ENCODE measurements at regions of chr3 and their contacts with region 1.

Region 1: DNA sequence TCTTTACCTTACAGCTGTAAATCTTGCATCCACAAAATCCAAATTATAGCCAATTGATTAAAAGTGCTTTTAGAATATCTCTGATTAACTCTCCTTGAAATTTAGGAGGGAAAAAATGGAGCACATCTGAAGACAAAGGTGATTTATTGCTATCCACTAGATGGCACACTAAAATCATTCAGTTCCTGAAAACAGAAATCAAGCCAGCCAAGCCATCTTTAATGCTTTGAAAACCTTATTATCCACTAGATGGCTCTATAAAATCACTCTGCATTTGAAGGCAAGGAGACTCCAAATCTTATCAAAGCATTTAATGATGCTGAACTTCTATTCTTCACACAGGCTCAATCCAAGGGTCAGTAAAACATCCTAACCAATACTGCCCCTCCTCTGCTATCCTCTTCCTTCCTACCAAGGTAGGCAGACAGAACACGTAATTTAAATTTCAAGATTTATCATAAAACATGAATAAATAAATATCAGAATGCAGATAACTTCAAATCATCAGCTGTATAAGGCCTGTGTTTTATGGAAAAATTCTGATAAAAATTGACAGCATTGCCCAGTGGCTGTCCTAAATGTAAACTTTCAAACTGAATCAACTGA is 48.4 kb downstream of the GOLIM4 start:
- DNase-seq: peak; percentile 55
- H3K4me3 ChIP-seq: no peak overlapping the region
- H3K27ac ChIP-seq: no peak overlapping the region
- H3K27me3 ChIP-seq: no peaks in the 10 kb centered on the region
- CTCF ChIP-seq: peak; percentile 83

Region 2: DNA sequence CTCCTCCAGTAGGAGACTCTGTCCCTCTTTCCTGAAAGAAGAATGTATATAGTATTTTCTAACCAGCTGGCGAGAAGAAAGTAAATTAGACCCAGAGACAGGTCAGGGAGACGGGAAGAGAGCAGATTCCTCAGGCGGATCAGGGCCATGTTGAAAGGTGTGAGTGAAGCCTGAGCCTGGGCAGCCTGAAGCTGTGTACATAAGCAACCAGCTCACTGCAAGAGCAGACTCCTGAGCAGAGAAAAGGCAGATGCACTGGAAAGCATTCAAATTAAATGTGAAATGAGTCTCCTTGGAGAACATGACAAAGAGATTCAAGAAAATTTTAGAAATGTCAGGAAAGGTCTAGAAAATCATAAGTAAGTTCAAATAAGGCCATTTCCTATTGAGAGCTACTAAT is 117.3 kb before region 1 on chr3:
- CTCF ChIA-PET with region 1: interaction called, 75 read pairs
- POLR2A ChIA-PET with region 1: no interaction called
- DNase-seq: no peak
- H3K4me3 ChIP-seq: no peak overlapping the region
- H3K27ac ChIP-seq: no peak overlapping the region
- H3K27me3 ChIP-seq: no peaks in the 10 kb centered on the region
- CTCF ChIP-seq: no peak

Region 3: GRCh38 chr3:167992381-167992780 is 54.9 kb before region 1 on chr3:
- CTCF ChIA-PET with region 1: no interaction called
- POLR2A ChIA-PET with region 1: no interaction called
- DNase-seq: no peak
- H3K4me3 ChIP-seq: no peak overlapping the region
- H3K27ac ChIP-seq: no peak overlapping the region
- H3K27me3 ChIP-seq: no peaks in the 10 kb centered on the region
- CTCF ChIP-seq: no peak

Region 4: GRCh38 chr3:168002786-168003368 is 44.4 kb before region 1 on chr3:
- CTCF ChIA-PET with region 1: no interaction called
- POLR2A ChIA-PET with region 1: no interaction called
- DNase-seq: no peak
- H3K4me3 ChIP-seq: no peak overlapping the region
- H3K27ac ChIP-seq: no peak overlapping the region
- H3K27me3 ChIP-seq: no peaks in the 10 kb centered on the region
- CTCF ChIP-seq: no peak

Region 5: GRCh38 chr3:168061332-168061996 is 14.2 kb after region 1 on chr3:
- CTCF ChIA-PET with region 1: interaction called, 14 read pairs
- POLR2A ChIA-PET with region 1: no interaction called
- DNase-seq: no peak
- H3K4me3 ChIP-seq: no peak overlapping the region
- H3K27ac ChIP-seq: no peak overlapping the region
- H3K27me3 ChIP-seq: no peaks in the 10 kb centered on the region
- CTCF ChIP-seq: no peak

Region 6: DNA sequence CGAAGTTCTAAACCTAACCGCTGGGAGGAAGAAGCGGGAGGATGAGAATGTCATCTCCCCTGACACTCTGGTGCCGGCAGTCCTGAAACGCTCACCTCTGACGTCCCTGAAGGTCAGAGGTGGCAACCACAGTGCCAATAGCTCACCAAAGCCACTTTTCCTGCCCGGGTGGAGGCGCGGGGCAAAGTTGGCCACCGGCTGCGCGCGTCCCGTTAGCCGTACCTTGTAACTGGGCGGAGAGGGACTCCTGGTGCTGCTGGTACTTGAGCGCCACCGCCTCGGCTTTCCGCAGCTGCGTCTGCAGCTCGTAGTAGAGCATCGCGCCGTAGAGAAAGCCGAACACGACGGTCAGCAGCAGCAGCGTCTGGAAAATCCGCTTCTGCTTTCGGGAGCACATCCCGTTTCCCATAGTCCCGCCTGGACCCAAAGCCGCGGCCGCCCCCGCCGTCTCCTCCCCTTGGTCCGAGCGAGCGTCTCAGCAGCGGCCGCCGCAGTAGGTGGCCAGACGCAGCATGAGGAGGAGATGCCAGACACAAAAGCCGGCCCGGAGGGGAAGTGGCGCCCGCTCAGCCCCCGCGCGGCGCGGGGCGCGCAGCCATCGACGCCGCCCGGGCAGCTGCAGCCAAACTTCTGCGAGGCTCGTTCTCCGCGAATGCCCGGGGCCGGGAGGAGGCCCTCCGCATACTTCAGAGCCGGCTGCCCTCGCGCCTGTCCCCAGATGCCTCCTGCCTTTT is 47.8 kb after region 1 on chr3:
- CTCF ChIA-PET with region 1: interaction called, 29 read pairs
- POLR2A ChIA-PET with region 1: no interaction called
- DNase-seq: no peak
- H3K4me3 ChIP-seq: peak overlapping the region; percentile 88
- H3K27ac ChIP-seq: peak overlapping the region; percentile 90
- H3K27me3 ChIP-seq: no peaks in the 10 kb centered on the region
- CTCF ChIP-seq: peak; percentile 37; the same call in 1 of the 2 replicates

Region 7: DNA sequence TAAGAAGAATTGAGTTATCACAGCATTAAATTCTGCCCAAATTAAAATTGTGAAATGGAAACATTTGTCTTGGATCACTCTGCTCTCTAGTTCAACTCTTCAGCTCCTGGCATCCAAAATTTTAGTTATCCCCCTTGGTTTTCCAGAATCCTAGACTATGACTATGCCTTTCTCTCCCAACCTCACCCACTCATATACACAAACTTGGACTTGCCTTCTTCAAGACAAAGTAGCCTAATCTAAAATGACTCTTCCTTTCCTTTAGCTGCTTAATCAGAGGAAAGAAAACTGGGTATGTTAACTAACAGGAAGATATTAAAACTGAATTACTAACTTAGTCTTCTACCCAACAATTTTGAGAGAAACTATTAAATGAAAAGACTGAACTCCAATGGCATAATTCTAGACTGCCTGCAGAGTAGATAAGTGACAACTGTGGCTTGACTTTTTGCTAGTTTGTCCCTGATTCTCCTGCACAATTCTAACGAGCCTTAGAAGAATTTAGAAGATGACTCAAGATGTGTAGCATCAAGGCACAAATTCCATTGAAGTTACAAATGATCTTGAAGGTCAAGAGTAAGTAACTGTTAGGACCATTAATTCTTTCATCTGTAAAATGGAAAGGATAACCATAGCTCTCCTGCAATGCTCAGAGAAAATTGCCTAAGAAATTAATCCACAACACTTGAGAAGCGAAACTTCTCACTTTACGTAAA is 53.6 kb after region 1 on chr3:
- CTCF ChIA-PET with region 1: interaction called, 29 read pairs
- POLR2A ChIA-PET with region 1: no interaction called
- DNase-seq: no peak
- H3K4me3 ChIP-seq: no peak overlapping the region
- H3K27ac ChIP-seq: no peak overlapping the region
- H3K27me3 ChIP-seq: no peaks in the 10 kb centered on the region
- CTCF ChIP-seq: no peak

Region 8: DNA sequence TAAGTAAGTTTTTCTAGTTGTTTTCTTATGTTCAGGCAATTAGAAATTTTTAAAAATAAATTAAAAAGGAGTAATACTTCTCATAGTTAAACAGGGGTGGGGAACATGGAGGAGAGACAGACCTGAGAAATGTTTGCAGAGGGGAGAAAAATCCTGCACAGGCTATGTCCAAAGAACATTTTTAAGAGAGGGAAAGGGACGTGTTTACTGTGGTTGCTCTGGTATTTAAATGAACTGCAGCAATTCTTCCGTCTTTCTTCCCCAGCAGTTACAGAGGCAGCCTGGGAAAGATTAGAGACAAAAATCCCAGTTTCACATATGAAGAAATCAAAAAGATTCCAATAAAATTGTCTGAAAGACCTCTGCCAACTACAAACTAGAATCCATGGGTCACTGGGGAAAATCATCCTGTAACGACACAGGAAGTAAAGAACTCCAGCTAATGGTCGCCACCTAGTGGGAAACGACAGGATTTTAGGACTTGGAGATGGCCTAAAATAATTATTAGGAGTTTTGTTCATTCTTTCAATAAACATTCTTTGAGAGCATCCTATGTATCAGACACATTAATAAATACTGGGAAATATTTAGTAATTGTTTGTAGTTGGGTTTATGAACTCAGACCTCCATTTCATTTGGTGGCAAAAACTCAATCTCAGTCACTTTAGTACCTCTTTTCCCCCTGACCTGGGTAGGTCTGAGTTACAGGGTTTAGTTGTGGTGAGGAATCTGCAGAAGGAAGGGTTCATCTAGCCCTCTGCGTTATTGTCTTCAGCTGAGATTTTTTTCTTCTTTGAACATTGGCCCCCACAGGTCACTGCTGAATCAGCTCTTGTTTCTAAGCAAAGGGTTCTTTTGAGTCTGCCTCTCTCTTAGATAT is 118.3 kb after region 1 on chr3:
- CTCF ChIA-PET with region 1: interaction called, 424 read pairs
- POLR2A ChIA-PET with region 1: no interaction called
- DNase-seq: peak; percentile 60
- H3K4me3 ChIP-seq: no peak overlapping the region
- H3K27ac ChIP-seq: no peak overlapping the region
- H3K27me3 ChIP-seq: no peaks in the 10 kb centered on the region
- CTCF ChIP-seq: peak; percentile 72

Region 9: GRCh38 chr3:168186293-168186983 is 139.1 kb after region 1 on chr3:
- CTCF ChIA-PET with region 1: interaction called, 13 read pairs
- POLR2A ChIA-PET with region 1: no interaction called
- DNase-seq: no peak
- H3K4me3 ChIP-seq: no peak overlapping the region
- H3K27ac ChIP-seq: no peak overlapping the region
- H3K27me3 ChIP-seq: no peaks in the 10 kb centered on the region
- CTCF ChIP-seq: no peak

Region 10: DNA sequence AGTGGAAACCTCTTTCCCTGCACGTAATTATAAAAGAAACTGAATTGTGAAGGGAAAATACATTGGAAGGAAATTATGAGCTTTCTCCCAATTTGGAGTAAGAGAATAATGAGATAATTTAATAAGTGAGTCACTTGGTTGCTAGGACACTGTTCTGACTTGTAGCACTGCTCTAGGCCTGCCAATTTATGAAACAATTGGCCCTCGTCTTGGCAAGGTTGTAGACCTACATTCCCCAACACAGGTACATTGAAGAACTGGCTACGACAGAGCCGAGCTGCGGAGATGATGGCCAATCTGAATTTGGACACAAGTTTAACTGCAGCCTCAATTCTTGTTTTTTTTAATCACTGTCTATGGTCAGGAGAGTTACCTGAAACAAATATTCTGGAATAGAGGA is 942.1 kb after region 1 on chr3:
- CTCF ChIA-PET with region 1: no interaction called
- POLR2A ChIA-PET with region 1: no interaction called
- DNase-seq: no peak
- H3K4me3 ChIP-seq: no peak overlapping the region
- H3K27ac ChIP-seq: no peak overlapping the region
- H3K27me3 ChIP-seq: no peaks in the 10 kb centered on the region
- CTCF ChIP-seq: no peak

Measured in AG04450 (cell line).